Naive thymus-derived CD4-positive, alpha-beta T cell (primary cell): ENCODE measurements at regions of chr11 and their contacts with region 1.

Region 1: GRCh38 chr11:86068951-86069407 is at the start of gene PICALM:
- DNase-seq: peak; percentile 88 to 96 (median 95)
- ATAC-seq: peak; percentile 93
- H3K4me3 ChIP-seq: peak within 1 kb of the TSS; percentile 82
- H3K4me3 Mint-ChIP-seq: peak within 1 kb of the TSS; percentile 95 to 100 (median 98)
- H3K27ac ChIP-seq: peak within 1 kb of the TSS; percentile 89
- H3K27ac Mint-ChIP-seq: peak within 1 kb of the TSS; percentile 92 to 97 (median 96)
- H3K4me1 ChIP-seq: peaks cover 14 to 16% of the 10 kb centered on the region in 2 donors
- H3K4me1 Mint-ChIP-seq: peaks cover 33 to 39% (median 36%) of the 10 kb centered on the region in 7 donors
- H3K27me3 ChIP-seq: no peaks in the 10 kb centered on the region
- H3K27me3 Mint-ChIP-seq: no peaks in the 10 kb centered on the region
- total RNA-seq, gene PICALM: 96.7 to 230 (median 102) TPM

Region 2: DNA sequence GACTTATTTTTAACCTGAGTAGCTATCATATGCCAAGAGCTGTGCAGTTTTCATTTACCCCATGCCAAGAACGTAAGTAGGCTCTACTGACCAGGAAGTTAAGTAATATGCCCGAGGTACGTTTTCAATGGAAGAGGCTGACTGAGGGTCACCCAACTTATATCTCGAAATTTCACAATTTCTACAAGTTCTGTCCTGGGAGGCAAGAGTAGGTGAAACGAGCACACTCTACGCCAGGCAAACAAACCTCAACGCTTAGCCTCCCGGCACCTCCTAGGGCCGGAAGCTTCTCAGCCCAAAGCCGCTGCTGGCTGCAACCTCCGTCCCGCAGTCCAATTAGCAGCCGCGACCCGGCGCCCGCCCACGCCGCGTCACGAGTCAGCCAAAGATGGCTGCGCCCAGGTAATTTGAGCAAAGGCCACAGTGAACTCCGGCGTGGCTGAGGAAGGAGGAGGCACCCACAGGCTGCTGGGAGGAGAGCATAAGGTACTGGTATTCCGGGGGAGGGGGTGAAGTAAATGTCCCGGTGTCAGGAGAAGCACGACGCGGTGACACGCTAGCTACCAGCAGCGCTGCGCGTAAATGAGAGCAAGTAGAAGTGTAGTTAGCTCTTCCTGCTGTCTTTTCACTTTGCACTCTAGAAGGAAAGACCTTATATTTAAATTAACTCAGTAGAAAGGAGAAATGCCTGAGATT is 421.2 kb before region 1 on chr11 and contains the start of gene TMEM126A:
- CTCF ChIA-PET with region 1: no interaction called
- POLR2A ChIA-PET with region 1: interaction called, 3 read pairs
- intact Hi-C with region 1: loop called (anchors 5 kb)
- DNase-seq: peak; percentile 85 to 92 (median 90)
- ATAC-seq: peak; percentile 99
- H3K4me3 ChIP-seq: peak within 1 kb of the TSS; percentile 83
- H3K4me3 Mint-ChIP-seq: peak within 1 kb of the TSS; percentile 92 to 100 (median 98)
- H3K27ac ChIP-seq: peak within 1 kb of the TSS; percentile 87
- H3K27ac Mint-ChIP-seq: peak within 1 kb of the TSS; percentile 86 to 99 (median 98)
- H3K4me1 ChIP-seq: peaks cover 11 to 14% of the 10 kb centered on the region in 2 donors
- H3K4me1 Mint-ChIP-seq: peaks cover 9 to 48% (median 38%) of the 10 kb centered on the region in 7 donors
- H3K27me3 ChIP-seq: no peaks in the 10 kb centered on the region
- H3K27me3 Mint-ChIP-seq: peaks cover 12 to 29% (median 22%) of the 10 kb centered on the region in 5 donors
- total RNA-seq, gene TMEM126A: 17.8 to 40.8 (median 18.9) TPM

Region 3: DNA sequence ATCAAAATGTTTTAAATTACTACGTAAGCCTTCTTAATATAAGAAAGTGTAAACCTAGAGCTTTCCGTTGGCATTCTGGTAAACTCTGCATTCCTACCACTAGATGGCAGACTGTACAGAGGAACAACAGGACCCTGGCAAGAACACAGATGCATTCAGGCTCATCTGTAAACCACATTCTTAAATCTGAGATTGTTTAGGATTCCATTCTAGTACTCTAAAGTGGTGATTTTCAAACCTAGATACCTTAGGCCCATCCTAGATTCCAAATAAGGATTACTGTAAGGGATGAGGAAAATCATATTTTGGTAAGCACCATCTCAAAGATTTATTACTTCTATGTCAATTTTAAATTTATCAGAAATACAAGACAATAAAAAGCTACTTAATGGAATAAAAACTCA is 27.0 kb before region 1 on chr11:
- CTCF ChIA-PET with region 1: interaction called, 10 read pairs
- POLR2A ChIA-PET with region 1: interaction called, 16 read pairs
- intact Hi-C with region 1: loop called (anchors 1 kb)
- DNase-seq: peak in 7 of 9 donors; percentile 63 to 79 (median 71)
- ATAC-seq: peak; percentile 98
- H3K4me3 ChIP-seq: no peak overlapping the region
- H3K4me3 Mint-ChIP-seq: peak overlapping the region in 4 of 10 donors; percentile 1 to 8 (median 5)
- H3K27ac ChIP-seq: peak overlapping the region; percentile 20
- H3K27ac Mint-ChIP-seq: peak overlapping the region in 7 of 9 donors; percentile 11 to 68 (median 38)
- H3K4me1 ChIP-seq: peaks cover 19 to 54% of the 10 kb centered on the region in 2 donors
- H3K4me1 Mint-ChIP-seq: peaks cover 49 to 73% (median 67%) of the 10 kb centered on the region in 7 donors
- H3K27me3 ChIP-seq: no peaks in the 10 kb centered on the region
- H3K27me3 Mint-ChIP-seq: no peaks in the 10 kb centered on the region

Region 4: DNA sequence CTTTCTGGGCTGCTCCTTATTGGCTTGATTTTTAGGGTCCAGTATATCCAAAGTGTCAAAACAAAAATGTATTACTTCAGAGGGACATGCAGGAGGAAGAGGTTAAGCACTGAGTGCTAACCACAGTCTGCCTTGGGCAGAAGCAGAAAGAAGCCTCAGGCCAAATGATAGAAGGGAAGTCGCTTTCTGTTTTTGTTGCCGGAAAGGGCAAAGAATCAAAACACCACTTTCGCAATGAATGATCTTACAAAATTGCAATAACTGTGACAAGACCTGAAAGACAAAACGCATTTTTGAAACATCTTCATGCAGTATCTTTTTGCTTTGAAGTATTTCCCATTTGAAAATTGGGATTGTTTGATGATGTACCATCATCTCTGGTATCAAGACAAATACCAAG is 70.0 kb after region 1 on chr11:
- CTCF ChIA-PET with region 1: no interaction called
- POLR2A ChIA-PET with region 1: no interaction called
- intact Hi-C with region 1: loop called in 1 of 2 experiments (anchors 2 kb)
- DNase-seq: peak in 1 of 9 donors; percentile 4
- ATAC-seq: peak; percentile 65
- H3K4me3 ChIP-seq: peak overlapping the region; percentile 5
- H3K4me3 Mint-ChIP-seq: peak overlapping the region in 9 of 10 donors; percentile 37 to 76 (median 45)
- H3K27ac ChIP-seq: no peak overlapping the region
- H3K27ac Mint-ChIP-seq: peak overlapping the region; percentile 7 to 87 (median 76)
- H3K4me1 ChIP-seq: peaks cover 4 to 30% of the 10 kb centered on the region in 2 donors
- H3K4me1 Mint-ChIP-seq: peaks cover 11 to 66% (median 16%) of the 10 kb centered on the region in 7 donors
- H3K27me3 ChIP-seq: no peaks in the 10 kb centered on the region
- H3K27me3 Mint-ChIP-seq: no peaks in the 10 kb centered on the region

Region 5: GRCh38 chr11:86193297-86194095 is 124.5 kb after region 1 on chr11:
- CTCF ChIA-PET with region 1: interaction called, 18 read pairs
- POLR2A ChIA-PET with region 1: interaction called, 6 read pairs
- intact Hi-C with region 1: loop called (anchors 1 kb)
- DNase-seq: peak; percentile 9 to 70 (median 65)
- ATAC-seq: peak; percentile 99
- H3K4me3 ChIP-seq: peak overlapping the region; percentile 36
- H3K4me3 Mint-ChIP-seq: peak overlapping the region; percentile 71 to 94 (median 88)
- H3K27ac ChIP-seq: no peak overlapping the region
- H3K27ac Mint-ChIP-seq: peak overlapping the region; percentile 21 to 91 (median 67)
- H3K4me1 ChIP-seq: peaks cover 5 to 7% of the 10 kb centered on the region in 2 donors
- H3K4me1 Mint-ChIP-seq: peaks cover 13 to 24% (median 15%) of the 10 kb centered on the region in 7 donors
- H3K27me3 ChIP-seq: no peaks in the 10 kb centered on the region
- H3K27me3 Mint-ChIP-seq: peaks cover 0 to 10% (median 3%) of the 10 kb centered on the region in 5 donors

Region 6: DNA sequence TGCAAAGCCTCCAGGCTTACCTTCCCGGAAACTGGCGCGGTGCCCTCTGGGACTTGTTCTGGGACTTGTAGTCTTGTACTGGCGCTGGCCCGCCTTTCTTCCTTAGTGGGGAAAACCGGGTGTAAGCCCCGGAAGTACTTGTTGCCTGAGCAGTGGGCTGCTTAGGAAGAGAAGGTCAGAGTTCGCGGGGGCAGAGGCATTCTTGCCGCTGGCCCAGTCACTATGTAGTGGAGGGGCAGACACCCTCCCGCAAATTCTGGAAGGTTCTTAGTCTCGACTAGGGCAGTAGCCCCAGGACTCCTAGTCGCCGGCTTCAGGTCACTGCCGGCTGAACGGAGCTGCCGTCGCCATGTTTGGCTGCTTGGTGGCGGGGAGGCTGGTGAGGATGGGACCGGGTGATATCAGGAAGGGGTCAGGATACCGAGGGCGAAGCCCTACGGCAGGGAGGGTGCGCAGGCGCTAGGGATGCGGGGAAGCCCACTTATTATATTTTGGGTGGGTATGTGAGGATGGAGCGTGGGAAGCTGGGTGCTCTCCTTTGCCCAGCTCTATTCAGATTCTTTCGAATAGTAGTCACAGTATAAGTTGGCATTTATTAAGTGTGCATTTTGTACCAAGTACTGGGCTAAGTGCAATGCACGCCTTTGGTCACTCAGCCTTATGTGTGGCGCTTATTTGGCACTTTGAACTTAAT is 233.3 kb after region 1 on chr11 and contains the start of gene HIKESHI:
- CTCF ChIA-PET with region 1: interaction called, 3 read pairs
- POLR2A ChIA-PET with region 1: interaction called, 3 read pairs
- intact Hi-C with region 1: loop called (anchors 1 kb)
- DNase-seq: peak; percentile 70 to 92 (median 81)
- ATAC-seq: peak; percentile 100
- H3K4me3 ChIP-seq: peak within 1 kb of the TSS; percentile 96
- H3K4me3 Mint-ChIP-seq: peak within 1 kb of the TSS; percentile 95 to 100 (median 100)
- H3K27ac ChIP-seq: peak within 1 kb of the TSS; percentile 86
- H3K27ac Mint-ChIP-seq: peak within 1 kb of the TSS; percentile 92 to 100 (median 97)
- H3K4me1 ChIP-seq: peaks cover 10 to 13% of the 10 kb centered on the region in 2 donors
- H3K4me1 Mint-ChIP-seq: peaks cover 4 to 37% (median 32%) of the 10 kb centered on the region in 7 donors
- H3K27me3 ChIP-seq: no peaks in the 10 kb centered on the region
- H3K27me3 Mint-ChIP-seq: peaks cover 0 to 8% (median 0%) of the 10 kb centered on the region in 5 donors
- total RNA-seq, gene HIKESHI: 16.7 to 38.4 (median 29.5) TPM